HCT116 (cell line): ENCODE measurements at regions of chr7 and their contacts with region 1.

Region 1: DNA sequence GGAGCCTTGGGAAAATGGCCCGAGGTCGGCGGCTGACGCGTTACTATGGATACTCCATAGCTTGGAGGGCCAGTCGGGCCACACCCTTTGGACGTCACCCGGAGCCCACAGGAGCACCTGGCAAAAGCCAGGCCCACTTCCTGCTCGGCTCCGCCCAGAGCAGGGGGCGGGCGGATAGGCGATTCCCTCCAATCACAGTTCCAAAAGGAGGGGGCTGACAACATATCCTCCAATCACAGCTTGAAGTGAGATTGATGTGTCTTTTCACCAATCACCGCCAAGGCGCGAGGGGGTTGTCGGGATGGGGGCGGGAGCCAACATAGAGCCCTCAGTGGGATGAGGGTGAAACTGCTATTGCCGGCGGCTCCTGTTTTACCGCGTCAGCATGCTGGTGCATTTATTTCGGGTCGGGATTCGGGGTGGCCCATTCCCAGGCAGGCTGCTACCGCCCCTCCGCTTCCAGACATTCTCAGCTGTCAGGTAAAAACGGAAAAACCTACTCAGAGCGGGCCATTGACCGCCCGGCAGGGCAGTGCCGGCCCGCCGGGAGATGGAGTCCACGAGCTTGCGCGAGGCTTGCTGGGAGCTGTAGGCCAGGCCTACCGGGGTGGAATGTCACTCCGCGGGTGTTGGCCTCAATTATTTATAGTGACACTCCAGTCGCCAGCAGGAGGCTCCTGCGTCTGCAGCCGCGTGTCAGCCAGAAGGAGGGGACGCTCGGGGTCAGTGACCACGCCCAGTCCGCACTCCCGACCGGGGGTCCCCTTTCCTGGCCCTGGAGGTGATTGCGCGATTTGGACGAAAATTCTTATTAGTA is at the start of gene ABCB8:
- DNase-seq: peak; percentile 99
- ATAC-seq: peak; percentile 90
- H3K4me3 ChIP-seq: peak within 1 kb of the TSS; percentile 72
- H3K27ac ChIP-seq: peak within 1 kb of the TSS; percentile 60
- H3K4me1 ChIP-seq: peaks cover 6 to 58% of the 10 kb centered on the region in 2 experiments
- H3K27me3 ChIP-seq: no peaks in the 10 kb centered on the region
- CTCF ChIP-seq: peak in 2 of 3 experiments; percentile 41 to 46; a peak in 4 of 6 replicates
- POLR2A ChIP-seq: peak; percentile 33
- RAD21 ChIP-seq: no peak
- total RNA-seq, gene ABCB8: 55.2 TPM

Region 2: GRCh38 chr7:151038951-151039849 is 10.9 kb after region 1 on chr7:
- CTCF ChIA-PET with region 1: no interaction called
- POLR2A ChIA-PET with region 1: interaction called, 11 read pairs
- RAD21 ChIA-PET with region 1: no interaction called
- intact Hi-C with region 1: no loop called
- DNase-seq: no peak
- ATAC-seq: peak; percentile 82
- H3K4me3 ChIP-seq: peak overlapping the region in 1 of 2 experiments; percentile 7; a peak in 2 of 4 replicates
- H3K27ac ChIP-seq: peak overlapping the region; percentile 28
- H3K4me1 ChIP-seq: peaks cover 16 to 19% of the 10 kb centered on the region in 2 experiments
- H3K27me3 ChIP-seq: no peaks in the 10 kb centered on the region
- CTCF ChIP-seq: no peak
- POLR2A ChIP-seq: no peak
- RAD21 ChIP-seq: no peak